ENCODE measurements at regions of chr21 and their contacts with region 1.

Region 1: DNA sequence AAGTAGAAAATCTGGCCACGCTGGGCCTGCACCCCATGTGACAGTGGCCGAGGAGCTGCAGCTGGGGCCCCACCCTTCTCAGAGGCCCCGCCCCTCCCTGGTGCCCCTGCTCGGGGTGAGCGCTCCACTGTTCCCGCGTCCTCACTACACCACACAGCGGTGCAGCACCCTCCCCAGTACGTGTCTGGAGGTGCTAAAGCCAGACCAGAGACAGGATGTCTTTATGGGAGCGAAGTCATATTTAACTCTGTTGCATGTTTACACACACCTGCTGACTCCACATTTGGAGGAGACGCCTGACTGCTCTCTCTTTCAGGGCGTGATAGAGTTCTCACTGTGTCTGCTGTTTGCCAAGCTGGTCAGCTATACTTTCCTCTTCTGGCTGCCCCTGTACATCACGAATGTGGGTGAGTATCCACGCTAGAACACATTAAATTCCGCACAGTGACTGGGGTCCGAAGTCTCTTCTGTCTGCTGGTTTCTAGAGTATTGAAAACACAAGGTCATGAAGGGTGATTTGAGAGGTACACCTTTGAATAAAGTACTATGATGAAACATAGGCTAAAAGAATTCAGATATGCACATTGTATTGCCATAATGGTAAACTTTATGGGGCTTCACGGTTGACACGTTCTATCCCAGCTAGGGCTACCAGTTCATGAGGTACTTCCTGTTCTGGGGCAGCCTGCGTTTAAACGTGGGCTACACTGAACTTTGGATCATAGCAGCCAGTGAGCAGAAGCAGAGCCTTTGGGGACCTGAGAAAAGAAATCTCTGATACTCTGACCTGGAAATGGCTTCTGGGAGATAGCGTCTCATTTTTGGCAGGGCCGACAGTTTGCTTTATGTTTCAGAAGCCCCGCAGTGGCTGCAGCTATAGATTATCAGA is 48.4 kb downstream of the SLC37A1 start:
- DNase-seq: peak; percentile 96
- H3K4me3 ChIP-seq: peak overlapping the region; percentile 68
- H3K27ac ChIP-seq: peak overlapping the region; percentile 96
- H3K4me1 ChIP-seq: peaks cover 56% of the 10 kb centered on the region
- CTCF ChIP-seq: peak; percentile 54

Region 2: GRCh38 chr21:42524349-42525151 is 37.5 kb before region 1 on chr21:
- CTCF ChIA-PET with region 1: no interaction called
- POLR2A ChIA-PET with region 1: interaction called, 9 read pairs
- intact Hi-C with region 1: loop called (anchors 5 kb)
- DNase-seq: peak; percentile 85
- H3K4me3 ChIP-seq: peak overlapping the region; percentile 53
- H3K27ac ChIP-seq: peak overlapping the region; percentile 98
- H3K4me1 ChIP-seq: peaks cover 63% of the 10 kb centered on the region
- CTCF ChIP-seq: no peak

Region 3: GRCh38 chr21:42614811-42615659 is 53.0 kb after region 1 on chr21:
- CTCF ChIA-PET with region 1: no interaction called
- POLR2A ChIA-PET with region 1: no interaction called
- intact Hi-C with region 1: loop called (anchors 10 kb)
- DNase-seq: peak; percentile 18
- H3K4me3 ChIP-seq: no peak overlapping the region
- H3K27ac ChIP-seq: no peak overlapping the region
- H3K4me1 ChIP-seq: no peaks in the 10 kb centered on the region
- CTCF ChIP-seq: no peak

Region 4: GRCh38 chr21:42663860-42664531 is 102.0 kb after region 1 on chr21:
- CTCF ChIA-PET with region 1: no interaction called
- POLR2A ChIA-PET with region 1: interaction called, 3 read pairs
- intact Hi-C with region 1: loop called (anchors 2 kb)
- DNase-seq: no peak
- H3K4me3 ChIP-seq: no peak overlapping the region
- H3K27ac ChIP-seq: no peak overlapping the region
- H3K4me1 ChIP-seq: peaks cover 67% of the 10 kb centered on the region
- CTCF ChIP-seq: no peak